Left ventricle myocardium inferior (tissue), 1 donor: ENCODE measurements at regions of chr19 and their contacts with region 1.

Region 1: DNA sequence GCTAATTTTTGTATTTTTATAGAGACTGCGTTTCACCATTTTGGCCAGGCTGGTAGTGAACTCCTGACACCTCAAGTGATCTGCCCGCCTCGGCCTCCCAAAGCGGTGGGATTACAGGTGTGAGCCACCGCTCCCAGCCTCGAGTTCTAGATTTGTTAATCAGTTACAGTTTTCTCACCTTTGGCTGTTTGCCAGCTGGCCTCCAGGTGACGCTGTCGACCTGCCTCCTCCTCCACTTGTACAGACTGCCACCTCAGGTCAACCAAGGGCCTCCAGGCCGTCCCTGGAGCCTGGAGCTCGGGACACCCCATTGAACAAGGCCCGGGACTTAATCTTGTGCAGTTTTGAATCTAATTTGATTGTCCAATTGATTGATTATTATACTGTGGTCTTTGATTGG is 45.5 kb downstream of the IER2 start:
- DNase-seq: no peak
- H3K4me3 ChIP-seq: no peak overlapping the region
- H3K27ac ChIP-seq: no peak overlapping the region
- H3K4me1 ChIP-seq: peaks cover 4% of the 10 kb centered on the region
- H3K27me3 ChIP-seq: no peaks in the 10 kb centered on the region
- CTCF ChIP-seq: no peak

Region 2: DNA sequence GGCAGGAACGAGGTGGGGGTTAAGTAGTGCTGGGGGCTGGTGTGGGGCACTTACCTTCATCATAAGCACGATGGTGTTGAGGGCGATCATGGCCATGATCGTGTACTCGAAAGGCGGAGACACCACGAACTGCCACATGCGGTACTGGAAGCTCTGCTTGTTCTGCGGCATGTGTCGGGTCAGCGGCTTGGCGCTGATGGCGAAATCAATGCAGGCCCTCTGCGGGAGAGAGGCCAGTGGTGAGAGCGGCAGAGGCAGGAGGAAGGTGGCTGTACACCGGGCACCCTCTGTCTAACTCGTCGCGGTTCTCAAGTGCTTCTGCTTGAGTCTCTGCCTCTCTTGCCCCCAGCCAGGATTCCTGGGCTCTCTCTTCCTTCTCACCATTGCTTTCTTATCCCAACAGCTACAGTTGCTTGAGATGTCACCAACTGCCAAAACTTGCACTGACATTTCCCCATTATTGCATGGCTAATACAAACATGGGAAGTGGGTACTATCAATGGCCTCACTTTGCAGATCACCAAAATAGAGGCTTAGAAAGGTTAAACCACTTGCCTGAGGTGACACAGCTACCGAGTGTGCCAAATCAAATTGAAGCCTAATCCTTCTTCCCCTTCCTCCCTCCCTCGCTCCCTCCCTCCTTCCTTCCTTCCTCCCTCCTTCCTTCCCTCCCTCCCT is 59.5 kb after region 1 on chr19:
- intact Hi-C with region 1: loop called (anchors 10 kb)
- DNase-seq: no peak
- H3K4me3 ChIP-seq: no peak overlapping the region
- H3K27ac ChIP-seq: no peak overlapping the region
- H3K4me1 ChIP-seq: no peaks in the 10 kb centered on the region
- H3K27me3 ChIP-seq: peaks cover 20% of the 10 kb centered on the region
- CTCF ChIP-seq: no peak

Region 3: GRCh38 chr19:13430790-13431582 is 235.3 kb after region 1 on chr19:
- intact Hi-C with region 1: no loop called
- DNase-seq: peak; percentile 20
- H3K4me3 ChIP-seq: no peak overlapping the region
- H3K27ac ChIP-seq: no peak overlapping the region
- H3K4me1 ChIP-seq: no peaks in the 10 kb centered on the region
- H3K27me3 ChIP-seq: peaks cover 7% of the 10 kb centered on the region
- CTCF ChIP-seq: peak; percentile 67